ENCODE measurements at regions of chr2 and their contacts with region 1.

Region 1: GRCh38 chr2:209074711-209075110 is 349.1 kb upstream of the MAP2 start:
- DNase-seq: no peak
- CTCF ChIP-seq: no peak

Region 2: GRCh38 chr2:209062210-209062609 is 12.5 kb before region 1 on chr2:
- CTCF ChIA-PET with region 1: interaction called, 12 read pairs
- POLR2A ChIA-PET with region 1: no interaction called
- DNase-seq: no peak
- CTCF ChIP-seq: no peak